ENCODE measurements at regions of chr5 and their contacts with region 1.

Region 1: DNA sequence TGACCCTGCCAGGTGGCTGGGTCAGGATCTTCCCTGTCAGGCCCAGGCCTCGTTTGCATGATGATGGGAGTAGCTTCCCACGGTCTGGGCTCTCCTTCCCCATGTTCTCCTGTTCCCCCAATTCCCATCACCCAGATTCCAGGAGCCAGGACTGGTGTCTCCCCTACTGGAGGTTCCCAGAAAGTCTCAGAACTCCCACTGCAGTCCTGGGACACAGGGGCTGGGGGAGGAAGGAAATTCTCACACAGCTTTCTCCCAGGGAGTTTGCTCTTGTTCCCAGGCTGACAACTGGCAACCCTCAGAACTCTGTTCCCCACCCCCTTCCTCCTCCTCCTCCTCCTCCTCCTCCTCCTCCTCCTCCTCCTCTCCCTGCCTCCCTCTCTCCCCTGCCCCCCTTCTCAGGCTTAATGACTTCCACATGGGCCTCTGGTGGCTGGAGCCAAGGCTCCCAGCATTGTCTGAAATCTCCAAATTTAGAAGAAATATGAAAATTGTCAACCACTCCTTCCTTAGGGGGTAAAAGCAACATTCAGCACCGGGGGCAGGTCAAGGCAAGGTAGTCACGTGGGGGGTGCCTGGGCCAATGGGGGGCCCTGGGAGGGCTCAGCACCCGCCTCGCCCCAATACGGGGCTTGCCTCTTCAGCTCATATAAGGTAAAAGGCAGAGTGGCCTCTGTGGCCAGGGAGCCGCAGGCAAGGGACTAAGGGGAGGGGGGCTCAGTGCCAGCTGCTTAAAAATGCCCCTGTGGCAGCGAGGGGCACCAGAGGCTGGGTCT is 27.3 kb upstream of the IL17B start:
- DNase-seq: peak; percentile 93
- H3K4me3 ChIP-seq: peak overlapping the region; percentile 100
- CTCF ChIP-seq: peak; percentile 18

Region 2: DNA sequence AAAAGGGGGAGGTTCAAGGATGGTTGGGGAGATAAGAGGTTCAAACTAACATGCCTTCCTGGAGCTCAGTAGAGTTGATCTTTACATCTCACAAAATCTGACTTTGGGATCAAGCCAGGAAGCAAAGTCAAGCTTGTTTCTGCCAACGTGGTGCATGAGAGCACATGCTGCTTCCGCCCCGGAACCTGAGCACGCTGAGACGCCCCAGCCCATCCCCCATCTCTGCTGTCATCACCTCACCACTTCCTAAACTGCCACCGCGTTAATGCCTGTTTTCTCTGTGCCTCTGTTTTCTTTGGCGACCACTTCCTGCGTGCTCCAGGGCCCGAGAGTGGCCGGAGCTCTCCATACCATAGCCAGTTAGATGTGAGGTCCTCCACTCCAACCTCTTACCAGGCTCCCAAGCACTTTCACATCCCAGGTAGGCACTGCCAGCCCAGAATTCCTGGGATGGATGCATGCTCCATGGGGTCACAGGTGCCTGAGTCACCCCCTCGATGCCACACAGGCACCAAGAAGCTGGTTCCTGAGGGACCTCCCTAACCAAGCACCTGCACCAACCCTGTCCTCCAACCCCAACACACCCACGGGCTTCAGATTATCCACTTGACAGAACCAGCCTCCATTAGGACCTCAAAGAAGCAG is 165.9 kb before region 1 on chr5:
- CTCF ChIA-PET with region 1: no interaction called
- POLR2A ChIA-PET with region 1: no interaction called
- DNase-seq: no peak
- H3K4me3 ChIP-seq: no peak overlapping the region
- CTCF ChIP-seq: no peak

Region 3: GRCh38 chr5:149387081-149387631 is 19.2 kb before region 1 on chr5:
- CTCF ChIA-PET with region 1: interaction called, 737 read pairs
- POLR2A ChIA-PET with region 1: interaction called, 36 read pairs
- DNase-seq: no peak
- H3K4me3 ChIP-seq: no peak overlapping the region
- CTCF ChIP-seq: no peak

Region 4: DNA sequence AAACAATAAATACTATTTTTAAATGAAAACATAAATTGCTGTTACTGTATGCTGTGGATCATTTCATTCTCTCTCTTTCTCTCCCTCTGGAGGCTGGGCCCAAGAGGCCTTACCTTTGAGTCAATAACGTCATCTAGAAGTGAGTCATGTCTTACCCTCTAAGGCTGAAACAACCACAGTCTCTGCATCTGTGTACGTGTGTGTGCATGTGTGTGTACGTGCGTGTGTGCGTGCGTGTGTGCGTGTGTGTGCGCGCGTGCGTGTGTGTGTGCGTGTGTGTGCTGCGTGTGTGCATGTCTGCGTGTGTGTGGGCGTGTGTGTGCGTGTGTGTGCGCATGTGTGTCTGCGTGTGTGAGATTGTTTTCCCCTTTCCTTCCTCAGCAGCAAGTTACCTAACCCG is 13.7 kb before region 1 on chr5:
- CTCF ChIA-PET with region 1: interaction called, 737 read pairs
- POLR2A ChIA-PET with region 1: interaction called, 36 read pairs
- DNase-seq: no peak
- H3K4me3 ChIP-seq: no peak overlapping the region
- CTCF ChIP-seq: no peak

Region 5: GRCh38 chr5:149416987-149417710 is 10.8 kb after region 1 on chr5:
- CTCF ChIA-PET with region 1: interaction called, 34 read pairs
- POLR2A ChIA-PET with region 1: interaction called, 255 read pairs
- DNase-seq: no peak
- H3K4me3 ChIP-seq: 0 out of 2 replicates have a peak overlapping the region, but pooled peaks have one; percentile 15
- CTCF ChIP-seq: no peak

Region 6: DNA sequence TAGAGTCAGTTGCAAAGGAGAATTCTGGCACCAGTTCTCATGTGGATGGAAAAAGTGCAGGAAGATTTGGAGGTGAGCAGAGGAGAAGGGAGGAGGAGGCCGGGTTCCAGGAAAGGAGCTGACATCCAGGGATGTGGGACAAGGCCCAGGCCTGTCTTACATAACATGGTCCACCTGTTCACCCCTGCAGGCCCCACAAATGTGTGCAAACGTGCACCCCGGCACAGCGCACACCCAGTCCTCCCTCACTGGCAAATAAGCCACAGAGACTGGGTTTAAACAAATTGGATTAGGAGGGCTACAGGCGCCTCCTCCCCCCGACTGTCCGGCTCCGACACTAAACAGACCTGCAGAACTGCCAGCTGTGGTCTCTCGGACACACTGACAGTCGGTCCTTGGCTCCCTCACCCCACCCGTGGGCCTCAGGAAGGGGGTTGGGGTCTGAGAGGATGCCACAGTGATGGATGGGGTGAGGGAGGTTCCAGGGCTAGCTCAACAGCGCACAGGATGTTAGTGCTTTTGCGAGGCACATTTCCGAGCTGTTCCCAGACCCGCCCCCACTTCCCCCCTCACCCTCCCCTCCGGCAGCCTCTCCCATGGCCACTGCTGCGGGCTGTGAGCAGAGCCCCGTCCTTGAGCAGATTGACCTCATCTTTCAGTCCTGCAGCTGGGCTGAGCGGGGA is 16.1 kb after region 1 on chr5:
- CTCF ChIA-PET with region 1: interaction called, 34 read pairs
- POLR2A ChIA-PET with region 1: interaction called, 255 read pairs
- DNase-seq: no peak
- H3K4me3 ChIP-seq: no peak overlapping the region
- CTCF ChIP-seq: no peak

Region 7: GRCh38 chr5:149434162-149435014 is 28.0 kb after region 1 on chr5:
- CTCF ChIA-PET with region 1: interaction called, 12 read pairs
- POLR2A ChIA-PET with region 1: interaction called, 26 read pairs
- DNase-seq: no peak
- H3K4me3 ChIP-seq: no peak overlapping the region
- CTCF ChIP-seq: peak; percentile 86